Breast epithelium (tissue), 4 donors: ENCODE measurements at regions of chr5 and their contacts with region 1.

Region 1: DNA sequence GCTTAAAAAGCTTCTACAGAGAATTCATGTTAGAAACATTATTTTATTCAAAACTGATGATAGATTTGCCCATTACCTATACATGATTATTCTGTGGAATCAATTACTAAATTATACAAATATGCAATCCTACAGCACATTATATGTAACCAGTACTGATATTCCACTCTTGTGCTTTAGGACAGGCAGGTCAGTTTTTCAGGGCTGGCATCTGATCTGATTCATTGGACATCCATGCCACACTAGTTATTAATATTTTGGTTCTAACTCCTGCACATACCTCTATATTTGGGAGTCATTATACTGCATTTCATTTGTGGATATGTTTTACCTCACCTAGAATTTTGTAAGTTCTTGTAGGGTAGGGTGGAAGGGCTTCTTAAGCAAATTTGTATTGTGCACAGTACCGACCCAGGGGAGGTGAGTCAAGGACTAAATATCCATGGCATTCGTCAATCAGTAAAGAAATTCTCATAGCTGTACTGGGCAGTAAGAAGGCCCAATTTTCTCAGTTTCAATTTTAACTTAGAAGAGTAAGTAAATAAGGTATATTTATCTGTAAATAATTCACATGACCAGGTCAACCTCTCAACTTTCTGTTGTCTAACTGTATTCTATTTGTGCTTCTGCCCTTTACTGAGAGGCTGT is 33.5 kb downstream of the ELOVL7 start:
- DNase-seq: no peak
- H3K4me3 ChIP-seq: no peak overlapping the region
- H3K27ac ChIP-seq: no peak overlapping the region
- H3K4me1 ChIP-seq: no peaks in the 10 kb centered on the region
- H3K27me3 ChIP-seq: no peaks in the 10 kb centered on the region
- CTCF ChIP-seq: no peak
- POLR2A ChIP-seq: no peak

Region 2: GRCh38 chr5:59583810-59584562 is 1226.6 kb before region 1 on chr5:
- intact Hi-C with region 1: loop called (anchors 5 kb)
- DNase-seq: no peak
- H3K4me3 ChIP-seq: no peak overlapping the region
- H3K27ac ChIP-seq: no peak overlapping the region
- H3K4me1 ChIP-seq: no peaks in the 10 kb centered on the region
- H3K27me3 ChIP-seq: no peaks in the 10 kb centered on the region
- CTCF ChIP-seq: no peak
- POLR2A ChIP-seq: no peak

Region 3: DNA sequence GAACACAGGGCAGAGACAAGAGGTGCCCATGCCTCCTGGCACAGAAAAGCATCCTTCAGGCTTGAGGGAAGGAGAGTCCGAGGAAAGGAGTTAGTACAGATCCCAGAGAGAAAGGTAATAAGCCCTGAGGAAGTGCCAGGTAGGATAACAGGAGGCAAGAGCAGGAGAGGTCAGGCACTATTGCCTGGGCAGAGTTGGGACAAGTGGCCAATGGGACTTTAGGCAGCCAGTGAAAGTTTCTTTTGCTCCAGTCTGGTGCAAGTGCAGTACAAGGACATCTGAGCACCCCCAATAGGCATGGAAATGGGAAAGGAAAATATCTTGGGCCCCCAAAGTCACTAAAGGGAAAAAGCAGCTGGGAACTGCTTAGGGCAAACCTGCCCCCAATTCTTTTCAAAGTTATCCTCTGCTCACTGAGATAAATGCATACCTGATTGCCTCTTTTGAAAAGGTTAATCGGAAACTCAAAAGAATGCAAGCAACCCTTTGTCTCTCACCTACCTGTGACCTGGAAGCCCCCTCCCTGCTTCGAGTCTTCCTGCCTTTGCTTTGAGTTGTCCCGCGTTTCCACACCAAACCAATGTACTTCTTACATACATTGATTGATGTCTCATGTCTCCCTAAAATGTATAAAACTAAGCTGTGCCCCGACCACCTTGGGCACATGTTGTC is 12.9 kb before region 1 on chr5:
- intact Hi-C with region 1: loop called (anchors 2 kb)
- DNase-seq: no peak
- H3K4me3 ChIP-seq: no peak overlapping the region
- H3K27ac ChIP-seq: no peak overlapping the region
- H3K4me1 ChIP-seq: no peaks in the 10 kb centered on the region
- H3K27me3 ChIP-seq: no peaks in the 10 kb centered on the region
- CTCF ChIP-seq: no peak
- POLR2A ChIP-seq: no peak